Heart right ventricle (tissue), 16 donors: ENCODE measurements at regions of chr7 and their contacts with region 1.

Region 1: GRCh38 chr7:154255324-154255723 is 203.1 kb downstream of the DPP6 start:
- DNase-seq: no peak
- ATAC-seq: no peak
- H3K4me3 ChIP-seq: no peak overlapping the region
- H3K27ac ChIP-seq: no peak overlapping the region
- H3K4me1 ChIP-seq: no peaks in the 10 kb centered on the region
- H3K27me3 ChIP-seq: peaks cover 0 to 9% (median 0%) of the 10 kb centered on the region in 7 donors
- CTCF ChIP-seq: no peak

Region 2: GRCh38 chr7:154195266-154195665 is 60.1 kb before region 1 on chr7:
- intact Hi-C with region 1: loop called in 1 of 10 experiments (anchors 10 kb)
- DNase-seq: no peak
- ATAC-seq: no peak
- H3K4me3 ChIP-seq: no peak overlapping the region
- H3K27ac ChIP-seq: no peak overlapping the region
- H3K4me1 ChIP-seq: no peaks in the 10 kb centered on the region
- H3K27me3 ChIP-seq: peaks cover 0 to 7% (median 0%) of the 10 kb centered on the region in 7 donors
- CTCF ChIP-seq: no peak

Region 3: DNA sequence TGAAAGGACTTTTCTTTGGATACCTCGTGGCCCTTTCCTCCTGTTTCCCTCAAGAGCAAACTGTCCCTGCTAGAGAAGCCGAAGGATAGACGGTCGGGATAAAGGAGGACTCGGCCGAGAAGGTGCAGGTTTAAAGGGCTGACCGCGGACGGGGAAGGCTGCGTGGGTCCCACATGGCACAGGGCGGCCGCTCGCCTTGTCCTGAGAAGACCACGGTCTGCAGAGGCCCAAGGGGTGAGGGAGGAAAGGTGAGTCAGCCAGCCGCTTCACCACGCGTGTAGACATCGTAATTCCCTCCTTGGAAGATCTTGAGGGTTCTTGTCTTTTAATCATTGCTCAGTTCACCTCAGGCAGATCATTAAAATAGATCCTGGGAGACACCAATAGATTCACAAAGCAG is 50.7 kb after region 1 on chr7:
- intact Hi-C with region 1: no loop called
- DNase-seq: no peak
- ATAC-seq: no peak
- H3K4me3 ChIP-seq: no peak overlapping the region
- H3K27ac ChIP-seq: no peak overlapping the region
- H3K4me1 ChIP-seq: no peaks in the 10 kb centered on the region
- H3K27me3 ChIP-seq: peaks cover 0 to 53% (median 13%) of the 10 kb centered on the region in 7 donors
- CTCF ChIP-seq: no peak

Region 4: GRCh38 chr7:154338701-154339506 is 83.6 kb after region 1 on chr7:
- intact Hi-C with region 1: no loop called
- DNase-seq: no peak
- ATAC-seq: no peak
- H3K4me3 ChIP-seq: no peak overlapping the region
- H3K27ac ChIP-seq: no peak overlapping the region
- H3K4me1 ChIP-seq: no peaks in the 10 kb centered on the region
- H3K27me3 ChIP-seq: peaks cover 0 to 5% (median 0%) of the 10 kb centered on the region in 7 donors
- CTCF ChIP-seq: no peak